Right ventricle myocardium superior (tissue), 1 donor: ENCODE measurements at regions of chr10 and their contacts with region 1.

Region 1: DNA sequence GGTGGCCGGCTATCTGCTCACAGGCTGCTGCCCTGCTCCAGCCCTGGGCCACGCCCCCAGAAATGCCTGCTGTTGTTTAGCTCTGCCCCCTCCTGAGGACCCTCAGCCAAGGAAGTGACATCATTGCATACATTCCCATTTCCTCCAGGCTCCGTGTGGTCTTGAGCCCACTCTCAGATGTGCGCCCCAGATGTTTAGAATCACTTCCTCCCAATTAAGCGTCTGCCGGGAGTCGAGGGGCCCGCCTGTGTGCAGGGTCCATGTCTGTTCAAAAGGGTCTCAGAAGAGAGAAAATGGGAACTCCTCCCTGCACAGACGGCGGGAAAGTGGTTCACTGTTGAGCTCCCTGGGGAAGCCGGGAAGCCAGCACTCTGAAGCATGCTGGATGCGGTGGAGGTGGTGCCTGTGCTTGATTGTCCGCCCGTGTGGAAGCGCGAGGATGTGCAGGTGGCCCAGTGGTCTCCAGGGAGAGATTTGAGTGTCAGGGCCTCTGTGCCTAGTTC is 116.9 kb upstream of the PPIF start:
- DNase-seq: no peak
- ATAC-seq: peak; percentile 29

Region 2: DNA sequence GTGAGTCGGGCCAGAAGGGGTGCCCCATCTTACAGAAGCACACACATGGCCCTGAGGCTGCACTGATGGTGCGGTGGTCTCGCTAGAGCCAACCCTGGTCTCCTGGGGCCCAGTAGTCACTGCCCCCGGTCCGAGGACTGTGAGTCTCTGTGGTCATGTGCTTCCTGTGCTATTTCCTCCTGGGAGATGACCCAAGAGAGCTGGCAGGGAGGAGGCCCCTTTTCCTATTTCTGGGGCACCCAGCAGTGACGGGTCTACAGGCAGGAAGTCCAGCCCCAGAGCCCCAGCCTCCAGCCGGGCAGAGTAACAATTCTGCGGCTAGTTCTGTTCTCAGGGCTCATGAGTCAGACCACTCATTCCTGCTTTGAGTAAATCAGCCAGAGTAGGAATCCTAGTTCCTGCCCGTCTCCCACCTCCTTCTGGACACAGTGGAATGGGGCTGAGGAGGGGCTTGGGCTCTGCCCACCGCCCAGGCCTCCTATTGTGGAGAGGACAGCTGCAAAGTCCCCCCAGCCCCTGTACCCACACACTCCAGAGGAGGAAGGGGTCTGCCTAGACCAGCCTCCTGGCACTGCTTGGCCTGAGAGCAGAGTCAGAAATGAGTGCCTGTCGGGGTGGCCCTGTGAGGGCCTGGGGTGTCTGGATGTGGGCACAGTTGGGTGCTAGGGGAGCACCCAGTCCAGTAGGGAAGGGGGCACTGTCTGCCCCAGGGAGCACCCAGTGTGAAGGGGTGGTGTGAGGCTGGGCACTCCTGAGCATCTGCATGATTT is 36.3 kb after region 1 on chr10:
- intact Hi-C with region 1: loop called (anchors 5 kb)
- DNase-seq: peak; percentile 80
- ATAC-seq: peak; percentile 54